Activated T-helper 2 cell treated with anti-CD3 and anti-CD28 coated beads, Interferon-gamma antibody, Interleukin-2, Interleukin-4, amounts not matched to agents 10 μg/mL and 5 μg/mL and 100 μg/mL, durations not matched to agents 14 hours and 24 hours and 36 hours (primary cell): ENCODE measurements at regions of chr5 and their contacts with region 1.

Region 1: DNA sequence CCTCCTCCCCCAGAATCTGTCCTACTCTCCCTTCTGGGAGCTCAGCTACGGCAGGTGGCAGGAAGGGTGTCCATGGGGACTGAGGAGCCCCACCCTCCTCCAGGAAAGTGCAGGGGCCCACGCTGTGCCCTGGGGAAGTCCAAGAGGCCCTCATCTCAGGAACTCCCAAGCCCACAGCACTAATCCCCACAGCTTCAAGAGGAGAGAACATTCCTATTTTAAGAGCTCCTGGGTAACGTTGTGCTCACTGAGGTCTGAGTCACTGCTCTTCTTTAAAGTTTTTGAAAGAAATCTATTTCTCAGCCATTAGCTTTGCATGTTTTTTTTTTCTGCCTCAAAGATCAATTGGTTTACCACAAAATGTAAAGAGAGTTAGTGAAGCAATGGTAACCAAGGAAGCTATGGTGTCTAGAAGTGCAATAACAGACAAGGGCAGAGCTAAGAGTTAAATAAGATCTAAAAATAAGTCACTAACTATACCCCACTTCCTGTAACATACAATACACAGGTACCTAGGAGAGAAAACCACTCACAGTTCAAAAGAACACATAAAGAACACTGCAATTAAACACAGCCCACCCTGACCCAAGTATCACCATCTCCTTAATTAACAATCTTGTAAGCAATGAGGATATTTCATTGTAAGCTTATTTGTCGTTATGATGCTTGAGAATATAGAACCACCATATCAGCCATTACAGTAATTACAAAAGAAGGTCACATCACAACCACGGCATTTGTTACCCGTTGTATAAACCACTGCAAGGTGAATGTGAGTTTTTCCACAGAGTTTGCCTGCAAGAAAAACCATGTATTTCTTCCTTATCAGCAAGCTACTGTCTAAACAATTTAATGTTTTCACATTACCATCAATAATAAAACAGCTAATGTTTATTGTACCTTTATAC is 382.3 kb upstream of the SLC30A5 start:
- DNase-seq: peak; percentile 10
- H3K4me3 Mint-ChIP-seq: peak overlapping the region; percentile 44
- H3K27ac Mint-ChIP-seq: peak overlapping the region; percentile 79
- H3K4me1 Mint-ChIP-seq: peaks cover 26% of the 10 kb centered on the region
- H3K27me3 Mint-ChIP-seq: no peaks in the 10 kb centered on the region

Region 2: GRCh38 chr5:68683632-68684036 is 27.9 kb before region 1 on chr5:
- intact Hi-C with region 1: no loop called
- DNase-seq: no peak
- H3K4me3 Mint-ChIP-seq: no peak overlapping the region
- H3K27ac Mint-ChIP-seq: no peak overlapping the region
- H3K4me1 Mint-ChIP-seq: no peaks in the 10 kb centered on the region
- H3K27me3 Mint-ChIP-seq: peaks cover 18% of the 10 kb centered on the region

Region 3: GRCh38 chr5:68884883-68885282 is 173.3 kb after region 1 on chr5:
- intact Hi-C with region 1: loop called (anchors 5 kb)
- DNase-seq: no peak
- H3K4me3 Mint-ChIP-seq: no peak overlapping the region
- H3K27ac Mint-ChIP-seq: no peak overlapping the region
- H3K4me1 Mint-ChIP-seq: peaks cover 50% of the 10 kb centered on the region
- H3K27me3 Mint-ChIP-seq: no peaks in the 10 kb centered on the region